ENCODE measurements at regions of chr10 and their contacts with region 1.

Region 1: DNA sequence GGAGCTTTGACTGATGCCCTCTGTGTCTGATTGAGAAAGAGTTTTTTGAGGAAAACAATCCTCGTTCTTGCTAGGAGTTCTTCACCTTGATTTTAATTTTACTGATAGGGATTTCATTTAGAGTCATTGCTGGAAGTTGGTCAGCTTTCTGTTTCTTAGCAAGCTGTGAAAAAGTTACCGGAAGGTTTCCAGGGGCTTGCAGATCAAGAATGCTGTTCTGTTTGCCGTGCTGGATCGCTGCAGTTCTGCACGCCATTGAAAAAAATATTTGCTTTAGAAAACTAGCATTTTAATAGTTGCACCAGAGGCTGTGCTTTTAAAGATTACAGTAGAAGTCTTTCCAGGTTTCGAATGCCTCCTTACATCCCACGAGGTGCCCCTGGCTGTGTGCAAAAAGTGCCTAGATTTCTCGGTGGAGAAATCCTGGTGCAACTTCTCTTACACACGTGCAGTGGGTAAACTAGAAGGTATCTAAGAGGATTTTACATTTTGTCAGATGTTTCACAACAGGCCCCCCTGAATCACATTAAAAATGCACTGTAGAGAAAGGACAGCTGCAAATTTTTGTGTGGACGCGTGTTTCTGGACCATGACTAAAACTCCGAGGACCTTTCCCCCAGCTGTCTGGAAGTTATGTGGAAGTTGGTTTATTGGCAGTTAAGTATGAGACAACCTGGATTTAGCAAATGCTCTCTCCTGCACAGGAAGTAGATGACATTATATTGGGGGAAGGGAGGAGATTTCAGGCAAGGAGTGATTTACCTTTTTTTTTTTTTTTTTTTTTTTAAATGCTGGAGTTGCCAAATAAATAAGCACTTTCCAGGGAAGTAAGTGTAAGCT is 5.8 kb downstream of the TCF7L2 start:
- DNase-seq: no peak
- ATAC-seq: peak; percentile 39
- H3K4me3 ChIP-seq: peak overlapping the region; percentile 57 to 90
- H3K27ac ChIP-seq: peak overlapping the region; percentile 94
- H3K4me1 ChIP-seq: peaks cover 62% of the 10 kb centered on the region
- H3K27me3 ChIP-seq: no peaks in the 10 kb centered on the region
- CTCF ChIP-seq: no peak

Region 2: DNA sequence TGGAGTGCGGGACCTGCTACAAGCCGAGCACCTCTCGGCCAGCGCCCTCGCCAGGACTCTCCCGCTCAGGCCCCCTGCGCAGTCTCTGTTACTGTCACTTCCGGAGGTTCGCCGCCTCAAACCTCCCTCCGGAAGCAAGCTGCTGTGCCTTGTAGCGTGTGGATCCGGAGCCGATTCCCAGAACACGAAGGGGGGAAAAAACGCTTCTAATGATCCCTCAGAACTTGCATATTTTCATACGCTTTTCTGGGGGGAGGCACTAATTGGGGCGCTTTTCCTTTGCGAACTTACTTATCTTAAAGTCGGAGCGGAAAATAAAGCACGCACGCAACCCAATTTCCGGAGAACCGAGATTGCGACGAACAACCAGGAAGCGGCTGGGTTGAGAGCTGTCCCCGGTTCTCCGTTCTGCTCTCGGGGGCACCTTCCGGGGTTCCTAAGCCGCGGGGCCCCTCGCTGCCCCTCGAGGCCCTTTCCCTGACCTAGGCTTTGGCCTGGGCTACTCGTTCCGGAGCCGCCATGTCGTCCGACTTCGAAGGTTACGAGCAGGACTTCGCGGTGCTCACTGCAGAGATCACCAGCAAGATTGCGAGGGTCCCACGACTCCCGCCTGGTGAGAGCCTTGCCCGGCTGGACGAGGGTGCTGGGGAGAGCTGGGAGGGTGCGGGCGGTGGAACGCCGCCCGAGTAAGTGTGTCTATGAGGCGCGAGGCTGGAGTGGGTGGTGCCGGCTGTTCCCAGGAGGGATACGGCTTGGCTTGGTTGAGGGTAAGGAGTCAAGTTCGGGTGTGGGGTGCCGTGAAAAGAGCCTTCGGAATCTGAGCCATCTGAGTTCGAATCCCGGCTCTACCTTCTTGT is 508.7 kb before region 1 on chr10 and contains the starts of genes VTI1A and ZDHHC6:
- CTCF ChIA-PET with region 1: no interaction called
- POLR2A ChIA-PET with region 1: interaction called, 13 read pairs
- in situ Hi-C with region 1: no loop called
- intact Hi-C with region 1: no loop called
- DNase-seq: peak; percentile 58
- ATAC-seq: peak; percentile 99
- H3K4me3 ChIP-seq: peak within 1 kb of the TSS; percentile 99
- H3K27ac ChIP-seq: peak within 1 kb of the TSS; percentile 99
- H3K4me1 ChIP-seq: peaks cover 22% of the 10 kb centered on the region
- H3K27me3 ChIP-seq: no peaks in the 10 kb centered on the region
- CTCF ChIP-seq: peak; percentile 33
- total RNA-seq, gene VTI1A: 36.3 TPM
- total RNA-seq, gene ZDHHC6: 40.3 TPM

Region 3: GRCh38 chr10:112619391-112619955 is 336.3 kb before region 1 on chr10:
- CTCF ChIA-PET with region 1: interaction called, 17 read pairs
- POLR2A ChIA-PET with region 1: no interaction called
- in situ Hi-C with region 1: no loop called
- intact Hi-C with region 1: no loop called
- DNase-seq: no peak
- ATAC-seq: no peak
- H3K4me3 ChIP-seq: no peak overlapping the region
- H3K27ac ChIP-seq: no peak overlapping the region
- H3K4me1 ChIP-seq: no peaks in the 10 kb centered on the region
- H3K27me3 ChIP-seq: no peaks in the 10 kb centered on the region
- CTCF ChIP-seq: no peak

Region 4: DNA sequence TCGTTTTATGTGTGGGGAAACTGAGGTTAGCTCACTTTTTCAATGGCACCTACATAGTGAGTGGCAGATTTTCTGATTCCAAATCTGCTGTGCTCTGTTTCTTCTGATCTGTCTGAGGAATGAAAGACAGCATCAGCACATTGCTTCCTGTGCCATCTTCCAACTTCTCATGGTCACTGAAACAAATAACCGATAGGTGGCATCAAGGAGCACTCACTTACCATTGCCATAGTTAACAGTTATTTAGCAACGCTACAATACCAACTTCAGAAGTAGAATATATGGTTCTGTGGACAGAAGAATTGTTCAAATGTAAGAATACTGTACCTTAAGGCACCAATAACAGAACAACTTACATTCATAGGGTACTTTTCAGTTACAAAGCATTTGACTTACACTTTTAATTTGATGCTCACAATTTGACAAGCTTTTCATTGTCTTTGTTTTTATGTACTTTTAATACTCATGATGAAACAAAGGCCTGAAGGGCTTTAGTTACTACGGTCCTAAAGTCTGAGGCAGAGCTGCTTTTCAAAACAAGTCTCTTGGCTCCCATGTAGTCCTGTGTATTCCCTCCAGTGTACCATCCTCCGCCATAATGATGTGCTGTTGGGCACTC is 234.6 kb before region 1 on chr10:
- CTCF ChIA-PET with region 1: interaction called, 10 read pairs
- POLR2A ChIA-PET with region 1: no interaction called
- in situ Hi-C with region 1: no loop called
- intact Hi-C with region 1: loop called (anchors 10 kb)
- DNase-seq: peak; percentile 43
- ATAC-seq: no peak
- H3K4me3 ChIP-seq: no peak overlapping the region
- H3K27ac ChIP-seq: peak overlapping the region; percentile 52
- H3K4me1 ChIP-seq: peaks cover 16% of the 10 kb centered on the region
- H3K27me3 ChIP-seq: no peaks in the 10 kb centered on the region
- CTCF ChIP-seq: peak; percentile 78

Region 5: DNA sequence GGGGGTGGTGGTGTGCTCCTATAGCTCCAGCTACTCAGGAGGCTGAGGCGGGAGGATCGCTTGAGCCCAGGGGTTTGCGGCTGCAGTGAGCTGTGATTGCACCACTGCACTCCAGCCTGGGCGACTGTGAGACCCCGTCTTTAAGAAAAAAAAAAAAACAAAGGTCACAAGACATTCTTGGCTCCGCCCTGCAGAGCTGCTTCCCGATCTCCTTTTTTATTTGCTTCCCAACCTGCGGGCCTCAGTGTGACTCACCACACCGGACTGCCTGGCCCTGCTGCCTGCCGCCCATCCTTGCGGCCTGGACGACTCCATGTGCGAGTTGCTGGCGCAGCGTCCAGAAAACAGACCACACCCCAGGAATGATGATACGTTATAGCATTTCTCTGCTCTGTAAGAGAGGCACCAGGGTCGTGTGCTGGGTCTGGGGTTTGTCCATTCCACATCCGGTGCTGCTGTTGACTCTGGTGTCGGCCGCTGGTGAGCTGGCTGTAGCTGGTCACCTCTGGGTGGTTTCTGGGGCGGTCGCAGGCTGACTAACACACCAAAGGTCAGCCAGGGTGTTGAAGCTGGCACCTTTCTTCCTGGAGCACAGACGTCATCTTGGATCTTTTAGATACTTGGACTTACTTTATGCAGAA is 117.9 kb after region 1 on chr10:
- CTCF ChIA-PET with region 1: interaction called, 3 read pairs
- POLR2A ChIA-PET with region 1: interaction called, 4 read pairs
- in situ Hi-C with region 1: no loop called
- intact Hi-C with region 1: loop called (anchors 5 kb)
- DNase-seq: peak; percentile 98
- ATAC-seq: peak; percentile 96
- H3K4me3 ChIP-seq: peak overlapping the region; percentile 18 to 21
- H3K27ac ChIP-seq: peak overlapping the region; percentile 99
- H3K4me1 ChIP-seq: peaks cover 70% of the 10 kb centered on the region
- H3K27me3 ChIP-seq: no peaks in the 10 kb centered on the region
- CTCF ChIP-seq: no peak

Region 6: DNA sequence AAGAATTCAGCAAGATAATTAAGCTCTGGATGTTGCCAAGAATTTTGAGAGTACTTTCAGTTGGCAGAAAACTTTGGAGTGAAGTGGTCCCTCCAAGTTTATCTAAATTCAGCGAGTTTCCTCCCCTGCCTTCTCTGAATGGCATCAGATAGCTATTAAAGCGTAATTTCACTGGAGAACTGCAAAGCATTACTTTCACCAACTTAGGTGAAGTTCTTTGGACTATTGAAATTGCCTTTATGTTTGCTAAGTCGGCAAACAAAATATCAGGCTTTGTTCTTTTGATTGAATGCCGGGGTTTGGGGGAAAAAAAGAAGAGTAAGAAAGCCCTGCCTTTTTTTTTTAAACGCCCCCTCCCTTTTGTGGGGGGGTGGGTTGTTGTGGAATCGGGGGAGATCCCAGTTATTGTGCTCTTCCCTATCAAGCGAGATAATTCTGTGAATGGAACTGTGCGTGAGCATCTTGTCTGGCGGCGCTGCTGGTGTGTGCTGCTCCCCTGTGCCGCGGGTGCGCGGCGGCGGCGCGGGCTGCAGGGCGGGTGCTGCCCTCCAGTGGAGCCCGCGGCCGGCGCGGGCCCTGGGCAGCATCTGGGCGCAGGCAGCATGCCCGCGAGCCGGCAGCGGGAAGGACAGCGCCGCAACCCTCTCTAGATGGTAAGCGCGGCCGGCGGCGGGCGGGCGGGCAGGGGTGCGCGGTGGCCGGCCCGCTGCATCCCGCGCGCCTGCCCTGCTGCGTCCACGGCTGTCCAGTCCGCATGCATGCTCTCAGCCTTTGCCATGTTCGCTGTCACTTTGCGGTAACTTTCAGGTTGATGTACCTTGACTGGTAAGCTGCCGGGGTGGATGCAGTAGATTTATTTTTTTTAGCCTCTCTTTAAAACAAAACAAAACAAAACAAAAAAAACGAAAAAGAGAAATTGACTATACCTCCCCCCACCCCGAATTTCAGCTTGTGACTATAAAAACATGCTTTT is 170.7 kb after region 1 on chr10:
- CTCF ChIA-PET with region 1: no interaction called
- POLR2A ChIA-PET with region 1: interaction called, 5 read pairs
- in situ Hi-C with region 1: no loop called
- intact Hi-C with region 1: loop called (anchors 2 kb)
- DNase-seq: peak; percentile 25
- ATAC-seq: peak; percentile 100
- H3K4me3 ChIP-seq: peak overlapping the region; percentile 23 to 51
- H3K27ac ChIP-seq: peak overlapping the region; percentile 83
- H3K4me1 ChIP-seq: peaks cover 48% of the 10 kb centered on the region
- H3K27me3 ChIP-seq: no peaks in the 10 kb centered on the region
- CTCF ChIP-seq: peak; percentile 99